ENCODE measurements at regions of chr19 and their contacts with region 1.

Region 1: GRCh38 chr19:41821003-41821735 is 23.3 kb downstream of the LYPD4 start:
- DNase-seq: peak; percentile 60
- H3K4me3 ChIP-seq: no peak overlapping the region
- H3K27ac ChIP-seq: no peak overlapping the region
- H3K4me1 ChIP-seq: no peaks in the 10 kb centered on the region
- H3K27me3 ChIP-seq: no peaks in the 10 kb centered on the region
- CTCF ChIP-seq: peak; percentile 55

Region 2: GRCh38 chr19:41795031-41795461 is 26.1 kb before region 1 on chr19:
- intact Hi-C with region 1: loop called (anchors 2 kb)
- DNase-seq: peak; percentile 77
- H3K4me3 ChIP-seq: no peak overlapping the region
- H3K27ac ChIP-seq: no peak overlapping the region
- H3K4me1 ChIP-seq: no peaks in the 10 kb centered on the region
- H3K27me3 ChIP-seq: no peaks in the 10 kb centered on the region
- CTCF ChIP-seq: peak; percentile 81